Breast epithelium (tissue), 4 donors: ENCODE measurements at regions of chr17 and their contacts with region 1.

Region 1: DNA sequence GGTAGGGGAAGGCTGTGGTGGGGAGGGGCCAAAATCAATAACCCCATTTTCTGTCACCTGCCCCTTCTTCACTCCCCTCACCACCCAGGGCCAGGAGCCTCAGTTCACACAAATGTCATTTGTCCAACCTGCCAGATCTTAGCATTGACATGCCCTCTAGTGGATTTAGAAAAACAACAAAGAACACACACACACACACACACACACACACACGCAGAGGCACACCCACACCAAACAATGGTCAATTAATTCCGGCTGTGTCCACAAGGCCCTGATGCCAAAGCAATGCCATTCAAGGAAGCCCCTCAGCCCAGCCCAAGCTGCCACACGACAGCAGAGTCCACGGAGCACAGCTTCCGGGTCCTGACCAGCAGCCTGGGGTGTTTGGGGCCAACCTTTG is 68.4 kb downstream of the NOG start:
- DNase-seq: no peak
- H3K4me3 ChIP-seq: no peak overlapping the region
- H3K27ac ChIP-seq: no peak overlapping the region
- H3K4me1 ChIP-seq: no peaks in the 10 kb centered on the region
- H3K27me3 ChIP-seq: no peaks in the 10 kb centered on the region
- CTCF ChIP-seq: no peak
- POLR2A ChIP-seq: no peak

Region 2: GRCh38 chr17:56707312-56708219 is 45.6 kb after region 1 on chr17:
- intact Hi-C with region 1: loop called (anchors 1 kb)
- DNase-seq: no peak
- H3K4me3 ChIP-seq: no peak overlapping the region
- H3K27ac ChIP-seq: no peak overlapping the region
- H3K4me1 ChIP-seq: no peaks in the 10 kb centered on the region
- H3K27me3 ChIP-seq: no peaks in the 10 kb centered on the region
- CTCF ChIP-seq: no peak
- POLR2A ChIP-seq: no peak